Prostate gland (tissue), 2 donors: ENCODE measurements at regions of chr3 and their contacts with region 1.

Region 1: DNA sequence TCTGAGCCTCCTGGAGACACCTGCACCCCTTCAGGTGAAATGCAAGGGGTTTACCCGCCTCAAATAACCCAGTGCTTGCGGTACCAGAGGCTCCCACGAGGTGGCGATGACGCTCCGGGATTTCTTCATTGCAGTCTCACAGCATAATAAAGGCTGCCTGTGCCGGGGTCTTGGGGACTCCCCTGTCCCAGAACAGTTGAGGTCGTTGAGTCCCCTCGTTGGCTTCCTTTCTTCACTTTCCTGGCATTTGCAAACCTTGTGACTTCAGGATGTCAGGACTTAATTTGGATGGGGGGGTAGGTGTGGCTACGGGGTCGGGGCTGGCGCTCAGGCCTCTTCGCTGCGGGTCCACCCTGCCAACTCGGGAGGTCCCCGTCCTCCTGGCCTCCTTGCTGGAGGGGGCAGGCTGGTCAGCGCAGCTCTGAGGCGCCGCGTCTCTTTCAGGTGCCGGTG is 1.3 kb downstream of the GNAT1 start:
- DNase-seq: peak; percentile 58
- H3K4me3 ChIP-seq: no peak overlapping the region
- H3K27ac ChIP-seq: no peak overlapping the region
- H3K4me1 ChIP-seq: no peaks in the 10 kb centered on the region
- H3K27me3 ChIP-seq: peaks cover 9% of the 10 kb centered on the region
- CTCF ChIP-seq: peak; percentile 82 to 93 (median 89)
- POLR2A ChIP-seq: no peak

Region 2: GRCh38 chr3:50008931-50009330 is 183.8 kb before region 1 on chr3:
- intact Hi-C with region 1: no loop called
- DNase-seq: no peak
- H3K4me3 ChIP-seq: no peak overlapping the region
- H3K27ac ChIP-seq: no peak overlapping the region
- H3K4me1 ChIP-seq: no peaks in the 10 kb centered on the region
- H3K27me3 ChIP-seq: no peaks in the 10 kb centered on the region
- CTCF ChIP-seq: no peak
- POLR2A ChIP-seq: no peak

Region 3: GRCh38 chr3:50121416-50122032 is 71.2 kb before region 1 on chr3:
- intact Hi-C with region 1: loop called (anchors 1 kb)
- DNase-seq: peak; percentile 75
- H3K4me3 ChIP-seq: no peak overlapping the region
- H3K27ac ChIP-seq: no peak overlapping the region
- H3K4me1 ChIP-seq: peaks cover 3% of the 10 kb centered on the region
- H3K27me3 ChIP-seq: no peaks in the 10 kb centered on the region
- CTCF ChIP-seq: peak; percentile 66 to 93 (median 92)
- POLR2A ChIP-seq: no peak

Region 4: GRCh38 chr3:50272911-50273693 is 80.4 kb after region 1 on chr3:
- intact Hi-C with region 1: loop called (anchors 2 kb)
- DNase-seq: peak; percentile 78
- H3K4me3 ChIP-seq: peak overlapping the region in 1 of 2 donors; percentile 19
- H3K27ac ChIP-seq: no peak overlapping the region
- H3K4me1 ChIP-seq: peaks cover 13% of the 10 kb centered on the region
- H3K27me3 ChIP-seq: no peaks in the 10 kb centered on the region
- CTCF ChIP-seq: peak; percentile 84 to 100 (median 99)
- POLR2A ChIP-seq: no peak

Region 5: GRCh38 chr3:50714946-50715345 is 522.2 kb after region 1 on chr3:
- intact Hi-C with region 1: no loop called
- DNase-seq: no peak
- H3K4me3 ChIP-seq: no peak overlapping the region
- H3K27ac ChIP-seq: no peak overlapping the region
- H3K4me1 ChIP-seq: no peaks in the 10 kb centered on the region
- H3K27me3 ChIP-seq: no peaks in the 10 kb centered on the region
- CTCF ChIP-seq: no peak
- POLR2A ChIP-seq: no peak